Heart right ventricle (tissue), 16 donors: ENCODE measurements at regions of chr7 and their contacts with region 1.

Region 1: GRCh38 chr7:36265680-36266079 is 112.6 kb downstream of the EEPD1 start:
- DNase-seq: peak in 1 of 2 donors; percentile 42
- ATAC-seq: peak in 5 of 8 donors; percentile 13 to 55 (median 34)
- H3K4me3 ChIP-seq: no peak overlapping the region
- H3K27ac ChIP-seq: peak overlapping the region in 3 of 10 donors; percentile 44 to 88 (median 63)
- H3K4me1 ChIP-seq: peaks cover 0 to 59% (median 44%) of the 10 kb centered on the region in 9 donors
- H3K27me3 ChIP-seq: no peaks in the 10 kb centered on the region
- CTCF ChIP-seq: no peak

Region 2: GRCh38 chr7:36227223-36227622 is 38.5 kb before region 1 on chr7:
- intact Hi-C with region 1: loop called in 2 of 10 experiments (anchors 5 to 10 kb)
- DNase-seq: peak in 1 of 2 donors; percentile 34
- ATAC-seq: peak in 6 of 8 donors; percentile 27 to 74 (median 72)
- H3K4me3 ChIP-seq: no peak overlapping the region
- H3K27ac ChIP-seq: peak overlapping the region in 2 of 10 donors; percentile 48 to 57
- H3K4me1 ChIP-seq: peaks cover 4 to 48% (median 22%) of the 10 kb centered on the region in 9 donors
- H3K27me3 ChIP-seq: no peaks in the 10 kb centered on the region
- CTCF ChIP-seq: no peak

Region 3: GRCh38 chr7:36565792-36566356 is 300.2 kb after region 1 on chr7:
- intact Hi-C with region 1: no loop called
- DNase-seq: no peak
- ATAC-seq: no peak
- H3K4me3 ChIP-seq: no peak overlapping the region
- H3K27ac ChIP-seq: peak overlapping the region in 1 of 10 donors; percentile 56
- H3K4me1 ChIP-seq: peaks cover 0 to 48% (median 5%) of the 10 kb centered on the region in 9 donors
- H3K27me3 ChIP-seq: no peaks in the 10 kb centered on the region
- CTCF ChIP-seq: no peak